ENCODE measurements at regions of chr2 and their contacts with region 1.

Region 1: GRCh38 chr2:172972005-172972619 is 103.5 kb upstream of the MAP3K20 start:
- DNase-seq: no peak
- H3K4me3 ChIP-seq: no peak overlapping the region
- H3K27ac ChIP-seq: no peak overlapping the region
- H3K4me1 ChIP-seq: no peaks in the 10 kb centered on the region
- H3K27me3 ChIP-seq: no peaks in the 10 kb centered on the region
- CTCF ChIP-seq: peak in 1 of 4 experiments; percentile 41
- POLR2A ChIP-seq: no peak

Region 2: GRCh38 chr2:173448938-173449471 is 476.9 kb after region 1 on chr2:
- intact Hi-C with region 1: loop called (anchors 10 kb)
- DNase-seq: peak; percentile 63
- H3K4me3 ChIP-seq: no peak overlapping the region
- H3K27ac ChIP-seq: peak overlapping the region in 1 of 2 donors; percentile 13
- H3K4me1 ChIP-seq: no peaks in the 10 kb centered on the region
- H3K27me3 ChIP-seq: no peaks in the 10 kb centered on the region
- CTCF ChIP-seq: peak in 3 of 4 experiments; percentile 48 to 55 (median 51)
- POLR2A ChIP-seq: no peak